GM13976 (cell line): ENCODE measurements at regions of chr15 and their contacts with region 1.

Region 1: DNA sequence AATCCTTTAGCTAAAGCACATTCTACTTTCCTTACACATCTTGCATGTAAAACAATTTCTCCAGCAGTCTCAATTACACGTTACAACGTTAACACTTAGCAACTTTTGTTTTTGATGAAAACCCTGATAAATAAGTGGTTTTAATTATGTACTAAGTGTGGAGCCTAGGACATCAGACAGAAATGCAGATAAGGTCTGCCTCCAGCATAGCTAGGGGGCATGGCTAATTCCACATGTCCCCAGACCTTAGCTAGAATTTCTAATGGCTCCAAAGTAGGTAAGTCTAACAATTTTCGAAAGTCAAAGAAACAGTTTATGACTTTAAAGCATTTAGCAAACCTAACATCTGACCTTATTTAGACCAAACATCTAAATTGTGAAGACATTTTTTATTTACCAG is 77.4 kb upstream of the TERB2 start:
- DNase-seq: no peak
- CTCF ChIP-seq: no peak

Region 2: GRCh38 chr15:44663409-44664308 is 215.4 kb before region 1 on chr15 and contains the start of gene SPG11:
- in situ Hi-C with region 1: no loop called
- DNase-seq: peak; percentile 91
- CTCF ChIP-seq: peak; percentile 86

Region 3: GRCh38 chr15:45022871-45023658 is 144.0 kb after region 1 on chr15 and contains the start of gene SORD:
- in situ Hi-C with region 1: loop called (anchors 10 kb)
- DNase-seq: peak; percentile 98
- CTCF ChIP-seq: no peak